Activated B cell treated with CpG ODN at 0.5 μM for 24 hours (primary cell): ENCODE measurements at regions of chr7 and their contacts with region 1.

Region 1: DNA sequence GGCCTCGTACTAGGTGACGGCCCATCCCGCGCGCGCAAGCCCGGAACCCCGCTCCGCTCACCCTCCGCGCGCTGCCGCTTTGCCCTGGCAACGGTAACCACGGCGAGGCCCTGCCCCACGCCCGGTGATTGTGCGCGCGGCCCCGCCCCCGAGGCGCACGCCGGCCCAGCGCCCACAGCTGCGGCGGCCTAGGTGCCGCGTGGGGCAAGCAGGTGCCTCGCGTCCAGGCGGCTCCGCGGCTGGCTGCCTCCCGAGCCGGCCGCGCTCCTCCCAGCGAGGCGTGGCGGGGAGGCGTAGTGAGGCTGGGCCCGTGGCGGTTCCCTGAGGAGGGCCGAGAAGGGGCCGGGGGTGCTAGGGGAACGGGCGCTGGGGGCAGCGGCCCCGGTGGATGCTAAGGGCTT is at the start of gene SMKR1:
- DNase-seq: peak; percentile 97
- ATAC-seq: peak; percentile 93
- H3K4me3 Mint-ChIP-seq: peak within 1 kb of the TSS; percentile 83
- H3K27ac Mint-ChIP-seq: peak within 1 kb of the TSS; percentile 78
- H3K4me1 Mint-ChIP-seq: peaks cover 30% of the 10 kb centered on the region
- H3K27me3 Mint-ChIP-seq: no peaks in the 10 kb centered on the region
- CTCF ChIP-seq: no peak
- total RNA-seq, gene SMKR1: 2.2 and 2.4 TPM in 2 replicates

Region 2: GRCh38 chr7:129308047-129308446 is 194.3 kb before region 1 on chr7:
- CTCF ChIA-PET with region 1: no interaction called
- POLR2A ChIA-PET with region 1: no interaction called
- intact Hi-C with region 1: no loop called
- DNase-seq: no peak
- ATAC-seq: no peak
- H3K4me3 Mint-ChIP-seq: no peak overlapping the region
- H3K27ac Mint-ChIP-seq: no peak overlapping the region
- H3K4me1 Mint-ChIP-seq: no peaks in the 10 kb centered on the region
- H3K27me3 Mint-ChIP-seq: no peaks in the 10 kb centered on the region
- CTCF ChIP-seq: no peak

Region 3: DNA sequence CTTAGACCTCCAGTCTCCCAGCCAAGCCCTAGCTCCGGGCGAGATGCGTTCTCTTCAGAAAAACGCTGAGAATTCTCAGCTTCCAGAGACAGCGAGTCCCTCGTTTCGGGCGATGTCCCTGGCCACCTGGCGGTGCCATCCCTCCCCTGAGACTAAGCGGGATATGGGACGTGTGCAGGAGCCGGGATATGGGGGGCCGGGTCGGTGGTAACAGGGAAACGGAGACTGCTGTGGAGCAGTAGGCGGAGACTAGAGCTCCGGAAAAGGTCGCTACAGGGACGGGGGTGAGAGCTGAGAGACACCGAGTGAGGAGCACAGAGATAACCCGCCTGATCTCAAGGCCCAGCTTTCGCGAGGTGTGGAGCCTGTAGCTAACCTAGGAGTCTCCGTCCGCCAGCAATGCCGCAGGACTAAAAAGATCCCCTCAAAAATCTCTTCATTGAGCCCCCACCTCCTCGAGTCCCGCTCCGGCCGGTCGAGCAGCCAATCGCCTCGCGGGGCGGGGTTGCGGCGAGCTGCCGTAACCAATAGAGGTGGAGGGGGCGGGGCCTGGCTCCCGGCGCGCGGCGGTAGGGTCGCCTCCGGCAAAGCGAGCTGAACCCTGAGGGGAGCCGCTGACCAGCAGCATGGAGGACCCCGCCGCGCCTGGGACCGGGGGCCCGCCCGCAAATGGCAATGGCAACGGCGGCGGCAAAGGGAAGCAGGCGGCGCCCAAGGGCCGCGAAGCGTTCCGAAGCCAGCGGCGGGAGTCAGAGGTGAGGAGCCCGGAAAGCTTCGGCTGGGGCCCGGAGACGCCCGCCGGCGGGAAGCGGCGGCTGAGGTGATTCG is 68.3 kb before region 1 on chr7 and contains the start of gene STRIP2:
- CTCF ChIA-PET with region 1: no interaction called
- POLR2A ChIA-PET with region 1: no interaction called
- intact Hi-C with region 1: loop called (anchors 2 kb)
- DNase-seq: peak; percentile 90
- ATAC-seq: peak; percentile 98
- H3K4me3 Mint-ChIP-seq: peak within 1 kb of the TSS; percentile 91
- H3K27ac Mint-ChIP-seq: peak within 1 kb of the TSS; percentile 41
- H3K4me1 Mint-ChIP-seq: peaks cover 14% of the 10 kb centered on the region
- H3K27me3 Mint-ChIP-seq: peaks cover 22% of the 10 kb centered on the region
- CTCF ChIP-seq: no peak
- total RNA-seq, gene STRIP2: 0.20 and 0.35 TPM in 2 replicates

Region 4: DNA sequence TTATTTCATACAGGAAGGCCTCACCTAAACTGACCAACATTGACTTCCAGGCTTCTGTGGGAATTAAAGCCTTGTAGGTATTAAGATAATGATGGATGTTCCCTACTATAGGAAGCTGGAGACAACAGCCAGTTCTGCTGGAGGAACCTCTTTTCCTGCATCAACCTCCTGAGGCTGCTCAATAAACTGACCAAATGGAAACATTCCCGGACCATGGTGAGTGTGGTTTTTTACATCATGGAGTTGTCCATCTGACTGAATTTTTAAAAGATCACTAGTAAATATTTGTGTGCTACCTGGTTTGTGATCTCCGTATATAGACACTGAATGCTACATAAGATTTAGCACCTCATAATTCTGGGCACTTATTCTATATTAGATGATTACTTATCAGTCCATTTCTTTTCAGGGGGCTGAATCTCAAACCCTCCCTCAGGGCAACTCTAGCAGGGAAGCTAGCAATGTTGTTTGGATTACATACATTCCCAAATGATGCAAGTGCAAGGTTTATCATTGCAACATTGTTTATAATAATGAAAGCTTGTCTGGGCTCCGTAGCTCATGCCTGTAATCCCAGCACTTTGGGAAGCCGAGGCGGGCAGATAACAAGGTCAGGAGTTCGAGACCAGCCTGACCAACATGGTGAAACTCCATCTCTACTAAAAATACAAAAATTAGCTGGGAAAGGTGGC is 21.6 kb before region 1 on chr7:
- CTCF ChIA-PET with region 1: no interaction called
- POLR2A ChIA-PET with region 1: no interaction called
- intact Hi-C with region 1: no loop called
- DNase-seq: no peak
- ATAC-seq: no peak
- H3K4me3 Mint-ChIP-seq: no peak overlapping the region
- H3K27ac Mint-ChIP-seq: no peak overlapping the region
- H3K4me1 Mint-ChIP-seq: no peaks in the 10 kb centered on the region
- H3K27me3 Mint-ChIP-seq: no peaks in the 10 kb centered on the region
- CTCF ChIP-seq: no peak

Region 5: DNA sequence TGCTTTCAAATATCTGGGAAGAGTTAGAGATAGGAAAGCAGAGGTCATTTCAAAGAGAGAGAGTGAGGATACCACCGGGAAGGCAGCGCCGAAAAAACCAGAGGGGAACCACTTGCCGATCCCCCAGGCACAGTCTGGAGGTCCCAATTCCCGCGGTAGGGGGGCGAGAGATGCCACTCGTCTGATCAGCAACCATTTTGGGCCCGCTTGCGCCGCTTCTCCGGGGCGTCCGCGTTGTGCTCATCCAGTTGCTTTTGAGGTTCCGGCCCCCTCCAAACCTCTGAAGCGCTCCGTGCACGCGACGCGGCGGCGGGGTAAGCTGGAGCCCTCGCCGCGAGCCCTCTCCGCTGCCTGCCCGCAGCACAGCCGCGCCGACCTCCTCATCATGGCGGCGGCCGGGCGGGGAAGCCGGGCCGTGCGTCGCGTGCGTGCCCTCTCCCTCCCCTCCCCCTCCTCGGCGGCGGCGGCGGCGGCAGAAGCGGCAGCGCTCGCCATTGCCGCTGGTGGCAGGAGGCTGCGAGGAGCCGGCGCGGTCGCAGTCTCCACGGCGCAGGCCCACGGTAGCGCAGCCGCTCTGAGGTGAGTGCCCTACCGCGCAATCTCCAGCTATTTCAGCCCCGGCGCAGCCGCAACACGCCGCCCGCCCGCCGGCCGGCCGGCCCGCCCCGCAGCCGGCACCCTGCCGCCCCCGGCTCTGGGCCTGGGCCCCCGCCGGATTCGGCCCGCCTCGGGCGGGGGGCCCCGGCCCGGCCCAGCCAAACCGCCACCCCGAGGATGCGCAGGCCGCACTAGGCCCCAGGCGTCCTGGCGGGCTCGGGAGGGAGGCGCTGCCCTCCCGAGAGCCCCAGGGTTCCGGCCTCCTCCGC is 109.1 kb after region 1 on chr7 and contains the start of gene NRF1:
- CTCF ChIA-PET with region 1: no interaction called
- POLR2A ChIA-PET with region 1: interaction called, 3 read pairs
- intact Hi-C with region 1: loop called (anchors 1 kb)
- DNase-seq: peak; percentile 95
- ATAC-seq: peak; percentile 89
- H3K4me3 Mint-ChIP-seq: peak within 1 kb of the TSS; percentile 91
- H3K27ac Mint-ChIP-seq: peak within 1 kb of the TSS; percentile 92
- H3K4me1 Mint-ChIP-seq: peaks cover 58% of the 10 kb centered on the region
- H3K27me3 Mint-ChIP-seq: no peaks in the 10 kb centered on the region
- CTCF ChIP-seq: no peak
- total RNA-seq, gene NRF1: 27.4 and 29.8 TPM in 2 replicates